ENCODE measurements at regions of chr1 and their contacts with region 1.

Region 1: DNA sequence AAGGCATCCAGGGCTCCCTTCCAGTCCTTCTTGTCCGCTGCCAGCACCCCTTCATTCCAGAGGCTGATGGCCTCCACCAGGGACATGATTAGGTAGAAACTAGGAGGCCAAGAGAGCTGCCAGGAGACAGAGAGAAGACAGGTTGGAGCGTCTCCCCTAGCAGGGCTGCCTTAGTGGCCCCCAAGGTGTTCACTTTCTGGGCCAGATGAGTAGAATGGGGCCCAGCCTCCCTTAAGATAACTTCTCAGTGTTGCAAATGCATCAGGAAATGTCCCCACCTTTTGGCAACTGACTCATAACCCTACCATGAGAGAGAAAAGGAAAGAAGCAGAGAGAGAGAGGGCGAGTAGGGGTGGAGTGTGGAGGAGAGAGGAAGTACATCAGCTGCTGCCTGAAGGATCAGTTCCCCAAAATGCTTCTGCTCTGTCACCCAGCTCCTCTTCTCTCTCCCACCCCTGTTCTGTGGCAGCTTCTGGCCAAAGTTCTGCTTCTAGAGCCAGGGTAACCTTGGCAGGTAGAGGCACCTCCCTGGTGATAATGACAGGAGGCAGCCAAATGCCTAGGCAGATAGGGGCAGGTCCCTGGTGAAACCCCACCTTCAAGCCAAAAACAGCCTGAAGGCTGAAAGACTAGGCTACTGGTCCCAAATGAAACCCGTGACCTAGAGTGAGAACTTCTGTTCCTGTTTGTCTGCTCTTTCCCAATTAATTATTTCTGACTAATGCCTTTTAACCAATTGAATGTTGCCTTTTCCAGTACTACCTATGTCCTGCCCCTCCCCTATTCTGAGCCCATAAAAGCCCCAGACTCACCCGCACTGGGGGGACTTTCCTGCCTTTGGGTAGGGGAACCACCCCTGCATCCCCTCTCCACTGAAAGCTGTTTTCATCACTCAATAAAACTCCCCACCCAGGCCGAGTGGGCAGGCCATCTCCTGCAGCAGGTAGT is at the start of gene NCF2:
- DNase-seq: peak; percentile 91
- ATAC-seq: peak; percentile 84
- H3K4me3 ChIP-seq: peak within 1 kb of the TSS; percentile 20 to 81 (median 42)
- H3K4me3 Mint-ChIP-seq: peak within 1 kb of the TSS; percentile 37
- H3K27ac ChIP-seq: peak within 1 kb of the TSS; percentile 91 to 93
- H3K27ac Mint-ChIP-seq: peak within 1 kb of the TSS; percentile 95
- H3K4me1 ChIP-seq: peaks cover 61 to 64% of the 10 kb centered on the region in 2 donors
- H3K4me1 Mint-ChIP-seq: peaks cover 60% of the 10 kb centered on the region
- H3K27me3 ChIP-seq: no peaks in the 10 kb centered on the region
- H3K27me3 Mint-ChIP-seq: no peaks in the 10 kb centered on the region
- CTCF ChIP-seq: no peak
- total RNA-seq, gene NCF2: 10.5 and 10.7 TPM in 2 replicates

Region 2: DNA sequence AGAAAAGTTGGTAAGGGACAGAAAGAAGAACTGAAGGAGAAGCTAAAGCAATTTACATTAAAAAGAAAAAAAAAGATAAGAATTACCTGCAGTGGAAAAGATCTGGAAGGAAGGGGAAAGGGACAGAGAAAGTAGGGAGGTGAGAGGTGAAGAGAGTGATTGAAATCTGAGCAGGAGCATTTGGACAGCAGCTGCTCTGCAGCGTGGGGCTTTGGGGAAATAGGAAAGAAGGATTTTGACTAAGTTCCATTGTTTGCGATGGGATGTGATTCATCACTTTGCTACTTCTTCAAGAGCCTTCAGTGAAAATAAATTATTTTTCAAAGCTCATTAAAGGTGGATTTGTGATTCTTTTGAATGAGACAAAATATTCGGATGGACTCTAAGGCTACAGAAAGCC is 146.3 kb before region 1 on chr1:
- CTCF ChIA-PET with region 1: no interaction called
- POLR2A ChIA-PET with region 1: no interaction called
- intact Hi-C with region 1: no loop called
- DNase-seq: no peak
- ATAC-seq: no peak
- H3K4me3 ChIP-seq: no peak overlapping the region
- H3K4me3 Mint-ChIP-seq: no peak overlapping the region
- H3K27ac ChIP-seq: no peak overlapping the region
- H3K27ac Mint-ChIP-seq: no peak overlapping the region
- H3K4me1 ChIP-seq: no peaks in the 10 kb centered on the region
- H3K4me1 Mint-ChIP-seq: no peaks in the 10 kb centered on the region
- H3K27me3 ChIP-seq: peaks cover 0 to 4% (median 0%) of the 10 kb centered on the region in 4 experiments
- H3K27me3 Mint-ChIP-seq: peaks cover 3% of the 10 kb centered on the region
- CTCF ChIP-seq: no peak

Region 3: DNA sequence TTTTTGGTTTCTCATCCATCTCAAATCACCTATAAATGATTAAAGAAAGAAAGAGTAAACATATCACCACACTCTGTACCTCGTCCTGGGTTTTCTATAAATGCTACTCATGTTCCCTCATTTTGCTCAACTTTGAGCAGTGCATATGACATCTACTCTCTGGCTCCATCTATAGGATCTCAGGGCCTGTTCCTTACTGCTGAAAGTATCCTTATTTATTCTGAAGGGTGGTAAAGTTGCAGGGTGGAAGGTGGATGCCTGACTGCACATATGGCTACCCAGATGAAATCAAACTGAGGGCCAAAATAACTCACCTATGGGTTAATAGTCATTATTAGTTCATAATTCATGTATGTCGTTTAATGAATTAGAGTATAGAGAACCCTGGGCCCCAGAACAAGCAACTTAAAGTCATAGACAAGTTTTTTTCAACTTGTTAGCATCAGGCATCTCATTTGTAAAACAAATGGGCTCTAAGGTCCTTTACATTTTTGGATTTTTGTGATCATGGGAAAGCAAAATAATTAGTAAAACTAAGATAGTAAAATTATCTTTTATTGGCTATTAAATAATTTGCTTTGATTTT is 46.8 kb before region 1 on chr1:
- CTCF ChIA-PET with region 1: no interaction called
- POLR2A ChIA-PET with region 1: no interaction called
- intact Hi-C with region 1: loop called (anchors 1 kb)
- DNase-seq: peak; percentile 59
- ATAC-seq: peak; percentile 63
- H3K4me3 ChIP-seq: no peak overlapping the region
- H3K4me3 Mint-ChIP-seq: no peak overlapping the region
- H3K27ac ChIP-seq: no peak overlapping the region
- H3K27ac Mint-ChIP-seq: no peak overlapping the region
- H3K4me1 ChIP-seq: peaks cover 4 to 5% of the 10 kb centered on the region in 2 donors
- H3K4me1 Mint-ChIP-seq: peaks cover 22% of the 10 kb centered on the region
- H3K27me3 ChIP-seq: no peaks in the 10 kb centered on the region
- H3K27me3 Mint-ChIP-seq: no peaks in the 10 kb centered on the region
- CTCF ChIP-seq: peak; percentile 67

Region 4: GRCh38 chr1:183554577-183554976 is 35.9 kb before region 1 on chr1:
- CTCF ChIA-PET with region 1: interaction called, 4 read pairs
- POLR2A ChIA-PET with region 1: interaction called, 3 read pairs
- intact Hi-C with region 1: loop called (anchors 2 kb)
- DNase-seq: peak; percentile 44
- ATAC-seq: peak; percentile 86
- H3K4me3 ChIP-seq: no peak overlapping the region
- H3K4me3 Mint-ChIP-seq: no peak overlapping the region
- H3K27ac ChIP-seq: peak overlapping the region in 1 of 2 donors; percentile 44
- H3K27ac Mint-ChIP-seq: peak overlapping the region; percentile 42
- H3K4me1 ChIP-seq: peaks cover 9 to 12% of the 10 kb centered on the region in 2 donors
- H3K4me1 Mint-ChIP-seq: peaks cover 20% of the 10 kb centered on the region
- H3K27me3 ChIP-seq: no peaks in the 10 kb centered on the region
- H3K27me3 Mint-ChIP-seq: no peaks in the 10 kb centered on the region
- CTCF ChIP-seq: no peak

Region 5: GRCh38 chr1:183580281-183580682 is 10.2 kb before region 1 on chr1:
- CTCF ChIA-PET with region 1: interaction called, 26 read pairs
- POLR2A ChIA-PET with region 1: interaction called, 12 read pairs
- intact Hi-C with region 1: loop called (anchors 1 kb)
- DNase-seq: peak; percentile 85
- ATAC-seq: peak; percentile 89
- H3K4me3 ChIP-seq: peak overlapping the region in 3 of 5 experiments; percentile 5 to 34 (median 10)
- H3K4me3 Mint-ChIP-seq: peak overlapping the region; percentile 83
- H3K27ac ChIP-seq: peak overlapping the region; percentile 66 to 69
- H3K27ac Mint-ChIP-seq: peak overlapping the region; percentile 97
- H3K4me1 ChIP-seq: peaks cover 26 to 32% of the 10 kb centered on the region in 2 donors
- H3K4me1 Mint-ChIP-seq: peaks cover 23% of the 10 kb centered on the region
- H3K27me3 ChIP-seq: no peaks in the 10 kb centered on the region
- H3K27me3 Mint-ChIP-seq: no peaks in the 10 kb centered on the region
- CTCF ChIP-seq: no peak

Region 6: DNA sequence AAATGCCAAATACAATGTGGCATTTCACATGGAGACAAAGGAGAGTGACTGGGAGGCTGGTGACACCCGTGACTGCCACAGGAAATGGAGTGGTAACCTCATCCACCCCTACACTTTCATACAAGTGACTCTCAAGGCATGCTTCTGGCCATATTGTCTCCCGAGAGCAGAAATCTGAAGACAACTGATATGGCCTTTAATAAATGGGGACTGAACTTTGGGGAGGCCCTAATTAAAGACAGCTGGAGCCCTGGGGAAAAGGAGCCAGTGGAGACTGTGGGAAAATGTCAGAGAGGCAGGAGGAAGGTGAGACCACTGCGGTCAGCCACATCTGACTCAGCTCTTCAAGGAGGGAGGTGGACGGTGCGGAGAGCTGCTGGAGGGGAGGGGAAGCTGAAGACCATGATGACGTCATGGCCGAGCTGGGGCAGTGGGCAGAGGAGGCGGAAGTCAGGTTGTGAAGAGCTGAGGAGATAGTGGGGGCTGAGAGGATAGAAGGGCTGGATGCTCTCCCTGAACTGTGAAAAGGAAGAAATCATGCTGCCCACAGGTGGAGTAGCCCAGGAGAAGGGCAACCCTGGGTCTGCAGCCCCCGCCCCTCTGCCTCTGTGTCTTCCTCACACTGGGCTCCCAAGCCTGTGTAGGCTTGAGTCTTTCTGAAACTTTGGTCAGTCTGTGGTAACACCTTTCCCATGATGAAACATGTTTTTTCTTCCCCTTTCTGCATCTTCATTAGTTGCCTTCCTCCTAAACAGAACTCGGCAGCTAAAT is 13.7 kb after region 1 on chr1:
- CTCF ChIA-PET with region 1: interaction called, 7 read pairs
- POLR2A ChIA-PET with region 1: interaction called, 10 read pairs
- intact Hi-C with region 1: loop called (anchors 1 kb)
- DNase-seq: no peak
- ATAC-seq: peak; percentile 44
- H3K4me3 ChIP-seq: no peak overlapping the region
- H3K4me3 Mint-ChIP-seq: peak overlapping the region; percentile 53
- H3K27ac ChIP-seq: peak overlapping the region in 1 of 2 donors; percentile 22
- H3K27ac Mint-ChIP-seq: peak overlapping the region; percentile 84
- H3K4me1 ChIP-seq: peaks cover 28 to 39% of the 10 kb centered on the region in 2 donors
- H3K4me1 Mint-ChIP-seq: peaks cover 38% of the 10 kb centered on the region
- H3K27me3 ChIP-seq: no peaks in the 10 kb centered on the region
- H3K27me3 Mint-ChIP-seq: no peaks in the 10 kb centered on the region
- CTCF ChIP-seq: no peak